Activated CD4-positive, alpha-beta T cell treated with anti-CD3 and anti-CD28 coated beads for 36 hours (primary cell): ENCODE measurements at regions of chr6 and their contacts with region 1.

Region 1: GRCh38 chr6:32868257-32868788 is 14.3 kb downstream of the PSMB9 start:
- DNase-seq: peak; percentile 92
- ATAC-seq: peak; percentile 73
- H3K4me3 Mint-ChIP-seq: no peak overlapping the region
- H3K27ac Mint-ChIP-seq: no peak overlapping the region
- H3K4me1 Mint-ChIP-seq: peaks cover 35% of the 10 kb centered on the region
- H3K27me3 Mint-ChIP-seq: peaks cover 8% of the 10 kb centered on the region

Region 2: GRCh38 chr6:31908791-31909190 is 959.5 kb before region 1 on chr6:
- CTCF ChIA-PET with region 1: no interaction called
- POLR2A ChIA-PET with region 1: no interaction called
- intact Hi-C with region 1: no loop called
- DNase-seq: no peak
- ATAC-seq: peak; percentile 57
- H3K4me3 Mint-ChIP-seq: no peak overlapping the region
- H3K27ac Mint-ChIP-seq: no peak overlapping the region
- H3K4me1 Mint-ChIP-seq: peaks cover 20% of the 10 kb centered on the region
- H3K27me3 Mint-ChIP-seq: no peaks in the 10 kb centered on the region

Region 3: DNA sequence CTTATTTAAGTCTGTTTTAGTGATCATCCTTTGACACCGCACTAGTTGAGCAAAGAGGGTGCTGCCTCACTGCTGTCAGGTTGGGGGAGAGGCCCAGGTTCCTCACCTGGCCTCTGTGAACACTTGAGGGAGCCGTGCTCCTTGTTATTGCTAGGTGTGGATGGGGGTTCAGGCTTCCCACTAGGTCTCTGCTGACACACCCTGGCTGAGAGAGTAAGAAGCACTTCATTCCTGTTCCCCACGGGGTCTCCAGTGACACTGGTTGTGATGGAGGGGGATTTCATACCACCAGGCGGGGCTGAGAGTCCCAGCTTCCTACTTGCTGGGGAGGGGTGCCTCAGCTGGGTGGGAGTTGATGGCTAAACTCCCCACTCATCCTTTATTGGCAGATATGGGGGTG is 633.4 kb before region 1 on chr6:
- CTCF ChIA-PET with region 1: no interaction called
- POLR2A ChIA-PET with region 1: no interaction called
- intact Hi-C with region 1: no loop called
- DNase-seq: peak; percentile 29
- ATAC-seq: peak; percentile 64
- H3K4me3 Mint-ChIP-seq: no peak overlapping the region
- H3K27ac Mint-ChIP-seq: no peak overlapping the region
- H3K4me1 Mint-ChIP-seq: peaks cover 5% of the 10 kb centered on the region
- H3K27me3 Mint-ChIP-seq: no peaks in the 10 kb centered on the region

Region 4: DNA sequence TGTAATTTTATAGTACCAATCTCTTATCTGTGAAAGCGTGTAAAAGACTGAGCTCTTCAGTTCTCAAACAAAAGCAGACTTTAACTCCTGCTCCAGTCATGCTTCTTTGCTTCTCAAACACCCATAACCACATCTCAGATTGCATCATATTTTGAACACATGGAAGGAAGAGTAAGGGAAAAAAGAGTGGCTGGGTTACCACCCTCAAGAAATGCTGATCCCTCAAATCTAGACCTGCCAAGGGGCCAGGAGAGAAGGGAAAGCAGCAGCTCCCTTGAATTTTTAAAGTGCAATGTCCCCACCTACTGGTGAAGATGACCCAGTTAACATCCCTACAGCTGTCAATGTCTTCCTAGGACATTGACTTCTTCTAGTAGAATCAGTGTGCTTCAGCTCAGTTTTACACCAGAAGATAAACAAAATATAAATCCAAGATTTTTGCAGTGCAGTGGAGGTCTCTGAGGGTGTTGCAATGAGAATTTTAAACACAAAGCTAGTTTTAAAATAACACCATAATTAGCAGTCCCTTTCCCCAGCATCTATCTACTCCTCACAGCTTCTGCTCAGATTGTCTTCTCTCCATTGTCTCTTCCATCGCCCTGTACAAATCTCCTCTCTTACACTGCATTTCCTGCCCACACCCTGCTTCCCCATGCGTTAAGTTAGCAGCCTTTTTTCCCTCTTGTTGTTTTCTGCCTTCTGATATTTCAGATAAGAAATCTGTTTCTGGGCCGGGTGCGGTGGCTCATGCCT is 82.4 kb before region 1 on chr6:
- CTCF ChIA-PET with region 1: interaction called, 27 read pairs
- POLR2A ChIA-PET with region 1: no interaction called
- intact Hi-C with region 1: no loop called
- DNase-seq: peak; percentile 45
- ATAC-seq: peak; percentile 78
- H3K4me3 Mint-ChIP-seq: no peak overlapping the region
- H3K27ac Mint-ChIP-seq: no peak overlapping the region
- H3K4me1 Mint-ChIP-seq: no peaks in the 10 kb centered on the region
- H3K27me3 Mint-ChIP-seq: peaks cover 25% of the 10 kb centered on the region

Region 5: DNA sequence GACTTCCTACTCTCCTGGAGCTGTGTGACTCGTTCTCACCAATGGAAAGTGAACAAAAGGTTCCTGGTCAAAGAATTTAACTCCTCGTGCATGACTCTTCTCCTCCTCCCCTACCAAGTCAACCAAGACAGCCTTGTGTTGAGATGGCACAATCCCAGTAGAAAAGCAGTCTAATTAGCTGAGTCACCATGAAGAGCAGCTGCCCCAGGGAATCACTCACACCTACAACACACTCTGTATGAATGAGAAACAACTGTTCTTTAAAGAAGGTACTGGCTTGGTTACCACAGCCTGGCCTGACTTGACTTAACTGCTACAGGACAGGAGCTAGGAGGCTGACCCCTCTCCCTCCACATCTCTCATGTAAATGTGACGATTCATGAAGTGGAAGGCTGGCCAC is 48.6 kb before region 1 on chr6:
- CTCF ChIA-PET with region 1: interaction called, 24 read pairs
- POLR2A ChIA-PET with region 1: no interaction called
- intact Hi-C with region 1: no loop called
- DNase-seq: no peak
- ATAC-seq: no peak
- H3K4me3 Mint-ChIP-seq: no peak overlapping the region
- H3K27ac Mint-ChIP-seq: no peak overlapping the region
- H3K4me1 Mint-ChIP-seq: peaks cover 12% of the 10 kb centered on the region
- H3K27me3 Mint-ChIP-seq: no peaks in the 10 kb centered on the region

Region 6: DNA sequence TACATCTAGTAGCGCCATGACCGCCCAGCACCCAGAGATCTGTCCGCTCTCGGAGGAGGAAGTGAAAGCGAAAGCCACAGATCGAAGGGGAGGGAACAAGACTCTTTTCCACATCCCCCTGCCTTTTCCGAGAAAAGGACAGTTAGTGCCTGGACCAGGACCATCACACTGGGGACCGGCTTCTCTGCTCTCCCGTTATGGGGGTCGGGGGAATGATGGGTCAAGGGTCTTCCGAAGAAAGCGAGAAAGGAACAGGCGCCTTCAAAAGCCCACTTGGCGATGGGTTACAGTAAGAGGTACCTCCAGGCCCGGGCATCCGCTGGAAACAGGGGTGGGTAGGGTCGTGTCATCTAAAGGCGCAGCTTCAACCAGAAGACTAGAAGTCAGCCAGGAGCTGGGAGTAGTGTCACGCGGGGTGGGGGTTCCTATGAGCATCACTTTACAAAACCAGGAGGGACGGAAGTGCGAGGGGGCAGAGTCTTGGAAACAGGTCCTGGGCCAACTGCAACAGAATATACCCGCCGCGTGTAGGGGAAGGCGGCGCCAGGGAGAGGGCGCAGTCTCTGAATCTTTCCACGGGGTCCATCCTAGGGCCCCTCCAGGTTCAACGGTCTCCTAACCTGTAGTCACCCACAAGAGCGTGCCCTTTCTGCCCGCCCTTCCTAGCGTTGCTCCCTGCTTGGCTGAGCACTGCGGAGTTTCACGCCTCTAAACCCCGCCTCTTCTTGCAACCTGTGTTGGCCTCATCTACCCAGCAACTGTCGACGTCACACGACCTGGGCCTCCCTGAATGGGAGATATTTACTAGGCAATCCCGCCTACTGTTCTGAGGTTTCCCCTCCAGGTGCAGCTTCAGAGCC is 24.1 kb before region 1 on chr6 and contains the start of gene PSMB8:
- CTCF ChIA-PET with region 1: interaction called, 253 read pairs
- POLR2A ChIA-PET with region 1: interaction called, 25 read pairs
- intact Hi-C with region 1: no loop called
- DNase-seq: peak; percentile 99
- ATAC-seq: peak; percentile 73
- H3K4me3 Mint-ChIP-seq: peak within 1 kb of the TSS; percentile 95
- H3K27ac Mint-ChIP-seq: peak within 1 kb of the TSS; percentile 97
- H3K4me1 Mint-ChIP-seq: peaks cover 66% of the 10 kb centered on the region
- H3K27me3 Mint-ChIP-seq: no peaks in the 10 kb centered on the region
- total RNA-seq, gene PSMB8: 238 to 338 TPM

Region 7: DNA sequence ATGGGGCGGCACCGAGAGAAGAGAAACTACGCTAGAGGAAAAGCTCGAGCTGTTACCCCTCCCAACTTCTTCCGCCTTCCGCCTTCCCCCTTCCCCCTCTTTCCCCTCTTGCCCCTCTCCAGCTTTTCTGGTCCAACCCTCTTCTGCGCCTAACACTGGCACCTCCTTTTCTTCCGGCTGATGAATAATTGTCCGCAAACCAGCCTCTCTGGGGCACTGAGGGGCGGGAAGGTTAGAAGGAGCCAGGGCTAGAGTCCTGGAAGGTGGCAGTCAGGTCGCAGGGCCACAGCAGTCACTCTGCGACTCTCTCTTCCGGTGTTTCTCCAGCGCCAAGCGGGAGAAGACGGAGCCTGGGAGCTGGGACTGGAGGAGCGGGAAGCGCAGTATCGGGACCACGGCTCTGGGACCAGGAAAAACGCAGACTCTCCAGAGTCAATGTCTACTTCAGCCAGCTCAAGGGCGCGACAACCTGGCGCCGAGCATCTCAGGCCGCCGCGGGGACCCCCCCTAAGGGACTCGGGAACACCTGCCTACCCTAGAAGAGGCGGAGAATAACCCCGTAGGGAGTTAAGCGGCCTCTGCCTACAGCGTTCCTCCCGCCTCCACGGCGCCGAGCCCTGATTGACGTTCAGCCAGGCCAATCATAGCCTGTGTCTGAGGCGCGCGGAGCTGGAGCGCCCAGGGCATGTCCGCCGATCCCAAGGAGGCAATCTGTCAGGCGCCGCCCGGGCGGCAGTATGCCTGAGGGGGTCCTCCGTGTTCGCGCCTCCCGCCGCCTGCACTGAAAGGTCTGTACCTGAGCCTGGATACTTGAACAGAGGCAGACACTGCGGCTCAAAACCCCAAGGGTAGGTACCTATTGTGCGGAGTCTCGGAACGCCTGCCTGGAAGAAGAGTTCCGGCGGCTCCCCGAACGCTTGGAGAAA is 26.0 kb after region 1 on chr6:
- CTCF ChIA-PET with region 1: interaction called, 9 read pairs
- POLR2A ChIA-PET with region 1: no interaction called
- intact Hi-C with region 1: loop called in 1 of 2 experiments (anchors 1 kb)
- DNase-seq: peak; percentile 96
- ATAC-seq: peak; percentile 99
- H3K4me3 Mint-ChIP-seq: peak overlapping the region; percentile 93
- H3K27ac Mint-ChIP-seq: peak overlapping the region; percentile 94
- H3K4me1 Mint-ChIP-seq: peaks cover 25% of the 10 kb centered on the region
- H3K27me3 Mint-ChIP-seq: no peaks in the 10 kb centered on the region